Activated CD4-positive, alpha-beta T cell treated with anti-CD3 and anti-CD28 coated beads for 36 hours (primary cell): ENCODE measurements at regions of chr5 and their contacts with region 1.

Region 1: GRCh38 chr5:140131967-140132409 is 6.3 kb downstream of the IGIP start:
- DNase-seq: peak; percentile 45
- ATAC-seq: peak; percentile 93
- H3K4me3 Mint-ChIP-seq: no peak overlapping the region
- H3K27ac Mint-ChIP-seq: no peak overlapping the region
- H3K4me1 Mint-ChIP-seq: peaks cover 41% of the 10 kb centered on the region
- H3K27me3 Mint-ChIP-seq: no peaks in the 10 kb centered on the region

Region 2: DNA sequence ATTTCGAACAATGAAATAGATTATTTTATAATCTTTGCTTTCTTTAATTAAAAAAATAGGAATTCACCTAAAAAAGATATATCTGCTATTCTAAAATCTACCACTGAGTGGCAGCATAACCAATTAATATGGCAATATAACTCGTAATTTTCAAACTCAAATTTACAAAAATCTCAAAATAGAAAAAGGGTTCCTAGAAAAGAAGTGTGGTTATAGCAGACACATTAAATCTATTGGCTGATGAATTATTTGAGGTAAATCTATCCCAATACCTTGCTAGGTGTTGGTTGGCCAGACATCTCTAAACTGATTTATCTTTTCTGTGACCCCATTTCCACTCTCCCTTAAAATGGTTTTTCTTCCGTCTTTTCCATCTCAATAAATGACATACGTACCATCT is 58.7 kb before region 1 on chr5:
- CTCF ChIA-PET with region 1: interaction called, 17 read pairs
- POLR2A ChIA-PET with region 1: no interaction called
- intact Hi-C with region 1: no loop called
- DNase-seq: no peak
- ATAC-seq: no peak
- H3K4me3 Mint-ChIP-seq: no peak overlapping the region
- H3K27ac Mint-ChIP-seq: no peak overlapping the region
- H3K4me1 Mint-ChIP-seq: no peaks in the 10 kb centered on the region
- H3K27me3 Mint-ChIP-seq: peaks cover 18% of the 10 kb centered on the region

Region 3: DNA sequence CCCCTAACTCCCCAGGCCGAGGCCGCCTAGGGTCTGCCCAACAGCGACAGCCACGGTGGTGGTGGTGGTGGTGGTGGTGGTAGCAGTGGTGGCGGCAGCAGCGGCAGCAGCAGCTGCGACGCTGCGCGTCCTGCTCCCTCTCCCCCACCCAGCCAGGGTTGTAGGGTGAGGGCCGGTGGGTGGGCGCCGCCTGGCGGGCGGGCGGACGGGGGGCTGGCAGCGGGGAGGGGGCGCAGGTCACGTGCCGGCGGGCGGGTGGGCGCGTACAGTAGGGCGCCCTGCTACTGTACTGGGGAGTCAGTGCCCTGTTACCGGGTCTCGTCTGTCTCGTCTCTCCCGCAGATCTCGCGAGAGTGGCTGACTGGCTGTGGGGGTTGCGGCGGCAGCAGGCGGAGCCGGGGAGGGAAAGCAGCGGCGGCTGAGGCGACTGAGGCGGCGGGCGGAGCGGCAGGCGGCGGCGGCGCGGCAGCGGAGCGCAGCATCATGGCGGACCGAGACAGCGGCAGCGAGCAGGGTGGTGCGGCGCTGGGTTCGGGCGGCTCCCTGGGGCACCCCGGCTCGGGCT is 18.2 kb before region 1 on chr5 and contains the start of gene PURA:
- CTCF ChIA-PET with region 1: interaction called, 9 read pairs
- POLR2A ChIA-PET with region 1: interaction called, 3 read pairs
- intact Hi-C with region 1: loop called in 1 of 2 experiments (anchors 2 kb)
- DNase-seq: peak; percentile 98
- ATAC-seq: peak; percentile 92
- H3K4me3 Mint-ChIP-seq: peak within 1 kb of the TSS; percentile 89
- H3K27ac Mint-ChIP-seq: peak within 1 kb of the TSS; percentile 84
- H3K4me1 Mint-ChIP-seq: peaks cover 65% of the 10 kb centered on the region
- H3K27me3 Mint-ChIP-seq: peaks cover 3% of the 10 kb centered on the region
- total RNA-seq, gene PURA: 9.5 to 10.7 TPM

Region 4: DNA sequence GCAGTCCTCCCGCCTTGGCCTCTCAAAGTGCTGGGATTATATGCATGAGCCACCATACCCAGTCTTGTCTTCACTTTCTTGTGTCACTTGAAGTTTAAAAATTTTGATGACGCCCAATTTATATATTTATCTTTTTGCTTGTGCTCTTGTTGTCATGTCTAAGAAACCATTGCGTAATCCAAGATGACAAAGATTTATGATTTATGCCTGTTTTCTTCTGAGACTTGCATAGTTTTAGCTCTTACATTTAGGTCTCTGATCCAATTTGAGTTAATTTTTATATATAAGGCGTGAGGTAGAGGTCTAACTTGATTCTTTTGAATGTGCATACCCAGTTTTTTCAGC is 288.2 kb after region 1 on chr5:
- CTCF ChIA-PET with region 1: no interaction called
- POLR2A ChIA-PET with region 1: no interaction called
- intact Hi-C with region 1: no loop called
- DNase-seq: no peak
- ATAC-seq: no peak
- H3K4me3 Mint-ChIP-seq: no peak overlapping the region
- H3K27ac Mint-ChIP-seq: no peak overlapping the region
- H3K4me1 Mint-ChIP-seq: peaks cover 49% of the 10 kb centered on the region
- H3K27me3 Mint-ChIP-seq: no peaks in the 10 kb centered on the region